Spleen (tissue), 13 donors: ENCODE measurements at regions of chr1 and their contacts with region 1.

Region 1: GRCh38 chr1:170929835-170930554 is 5.3 kb upstream of the MROH9 start:
- DNase-seq: no peak
- H3K4me3 ChIP-seq: no peak overlapping the region
- H3K27ac ChIP-seq: no peak overlapping the region
- H3K4me1 ChIP-seq: no peaks in the 10 kb centered on the region
- H3K27me3 ChIP-seq: no peaks in the 10 kb centered on the region
- CTCF ChIP-seq: peak in 9 of 11 experiments; percentile 40 to 80 (median 58)
- POLR2A ChIP-seq: no peak

Region 2: DNA sequence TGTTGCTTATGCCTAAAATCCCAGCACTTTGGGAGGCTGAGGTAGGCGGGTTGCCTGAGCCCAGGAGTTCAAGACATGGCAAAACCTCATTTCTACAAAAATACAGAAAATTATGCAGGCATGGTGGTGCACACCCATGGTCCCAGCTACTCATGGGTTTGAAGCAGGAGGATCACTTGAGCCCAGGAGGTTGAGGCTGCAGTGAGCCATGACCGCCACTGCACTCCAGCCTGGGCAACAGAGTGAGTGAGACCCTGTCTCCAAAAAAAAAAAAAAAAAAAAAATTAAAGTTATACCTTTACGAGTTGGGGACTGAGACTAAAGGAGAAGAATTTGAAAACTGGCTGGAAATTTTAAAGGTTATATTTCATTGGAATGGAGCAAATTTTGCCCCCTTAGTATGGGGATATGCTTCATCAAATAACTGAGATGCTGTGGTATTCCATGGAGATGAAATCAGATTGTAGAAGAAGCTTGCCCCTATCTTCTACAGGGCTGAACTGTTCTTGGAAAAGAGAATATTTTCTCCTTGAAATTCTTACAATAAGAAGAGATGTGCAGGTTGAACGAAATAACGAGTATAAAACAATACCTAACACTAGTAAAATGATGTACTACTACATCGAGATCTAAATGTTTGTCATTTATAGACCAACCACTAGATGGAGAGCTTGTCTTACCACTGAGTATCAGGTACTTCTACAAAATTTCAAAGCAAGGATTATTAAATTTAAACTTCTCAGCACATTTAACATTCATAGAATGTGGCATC is 1001.4 kb before region 1 on chr1:
- intact Hi-C with region 1: loop called (anchors 10 kb)
- DNase-seq: no peak
- H3K4me3 ChIP-seq: no peak overlapping the region
- H3K27ac ChIP-seq: no peak overlapping the region
- H3K4me1 ChIP-seq: no peaks in the 10 kb centered on the region
- H3K27me3 ChIP-seq: no peaks in the 10 kb centered on the region
- CTCF ChIP-seq: peak in 10 of 11 experiments; percentile 16 to 56 (median 42)
- POLR2A ChIP-seq: no peak